Psoas muscle (tissue), 8 donors: ENCODE measurements at regions of chr19 and their contacts with region 1.

Region 1: DNA sequence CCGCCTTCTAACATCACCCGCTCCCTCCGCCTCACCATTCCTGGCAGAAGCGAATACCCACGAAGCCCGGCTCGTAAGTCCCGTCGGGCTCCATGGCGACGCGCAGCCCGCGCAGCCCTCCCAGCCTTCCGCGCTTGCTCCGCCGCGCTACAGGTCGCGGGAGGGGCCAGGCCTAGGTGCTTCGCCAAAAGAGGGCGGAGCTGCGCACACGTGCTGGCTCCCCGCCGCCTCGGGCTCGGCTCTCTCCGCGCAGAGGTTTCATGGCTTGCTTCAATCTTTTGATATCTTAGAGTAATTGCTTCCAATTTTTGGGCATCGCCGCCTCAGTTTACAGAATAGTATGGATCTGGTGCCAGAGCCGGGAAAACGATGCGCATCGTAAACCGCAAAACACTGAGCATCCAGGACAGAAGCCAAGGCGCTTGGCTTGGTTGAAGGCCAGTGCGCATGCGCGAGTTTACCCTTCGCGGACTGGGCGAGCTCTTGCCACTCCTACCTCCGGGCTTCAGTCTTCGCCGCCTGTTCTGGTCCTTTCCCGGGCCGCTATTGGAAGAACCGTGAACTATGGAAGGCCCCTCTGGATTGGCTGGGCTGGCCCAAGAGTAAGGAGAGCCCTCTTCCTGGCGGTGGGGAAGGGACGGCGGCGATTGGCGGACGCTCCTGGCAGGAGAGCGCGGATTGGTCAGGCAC is at the start of gene POLR2I:
- DNase-seq: peak; percentile 99
- ATAC-seq: peak; percentile 93 to 95 (median 95)
- H3K4me3 ChIP-seq: peak within 1 kb of the TSS; percentile 93
- H3K27ac ChIP-seq: peak within 1 kb of the TSS; percentile 89
- H3K4me1 ChIP-seq: peaks cover 15% of the 10 kb centered on the region
- H3K27me3 ChIP-seq: no peaks in the 10 kb centered on the region
- CTCF ChIP-seq: no peak
- total RNA-seq, gene POLR2I: 89.7 to 126 (median 110) TPM

Region 2: GRCh38 chr19:35995048-35995993 is 119.6 kb before region 1 on chr19 and contains the start of gene SDHAF1:
- intact Hi-C with region 1: loop called in 1 of 2 experiments (anchors 10 kb)
- DNase-seq: peak; percentile 98 to 99
- ATAC-seq: peak; percentile 94 to 98 (median 97)
- H3K4me3 ChIP-seq: peak within 1 kb of the TSS; percentile 97
- H3K27ac ChIP-seq: peak within 1 kb of the TSS; percentile 92
- H3K4me1 ChIP-seq: peaks cover 26% of the 10 kb centered on the region
- H3K27me3 ChIP-seq: no peaks in the 10 kb centered on the region
- CTCF ChIP-seq: no peak
- total RNA-seq, gene SDHAF1: 7.2 to 17.3 (median 12.2) TPM

Region 3: GRCh38 chr19:36073121-36073872 is 41.6 kb before region 1 on chr19:
- intact Hi-C with region 1: no loop called
- DNase-seq: no peak
- ATAC-seq: no peak
- H3K4me3 ChIP-seq: no peak overlapping the region
- H3K27ac ChIP-seq: no peak overlapping the region
- H3K4me1 ChIP-seq: no peaks in the 10 kb centered on the region
- H3K27me3 ChIP-seq: no peaks in the 10 kb centered on the region
- CTCF ChIP-seq: no peak